ENCODE measurements at regions of chr15 and their contacts with region 1.

Region 1: DNA sequence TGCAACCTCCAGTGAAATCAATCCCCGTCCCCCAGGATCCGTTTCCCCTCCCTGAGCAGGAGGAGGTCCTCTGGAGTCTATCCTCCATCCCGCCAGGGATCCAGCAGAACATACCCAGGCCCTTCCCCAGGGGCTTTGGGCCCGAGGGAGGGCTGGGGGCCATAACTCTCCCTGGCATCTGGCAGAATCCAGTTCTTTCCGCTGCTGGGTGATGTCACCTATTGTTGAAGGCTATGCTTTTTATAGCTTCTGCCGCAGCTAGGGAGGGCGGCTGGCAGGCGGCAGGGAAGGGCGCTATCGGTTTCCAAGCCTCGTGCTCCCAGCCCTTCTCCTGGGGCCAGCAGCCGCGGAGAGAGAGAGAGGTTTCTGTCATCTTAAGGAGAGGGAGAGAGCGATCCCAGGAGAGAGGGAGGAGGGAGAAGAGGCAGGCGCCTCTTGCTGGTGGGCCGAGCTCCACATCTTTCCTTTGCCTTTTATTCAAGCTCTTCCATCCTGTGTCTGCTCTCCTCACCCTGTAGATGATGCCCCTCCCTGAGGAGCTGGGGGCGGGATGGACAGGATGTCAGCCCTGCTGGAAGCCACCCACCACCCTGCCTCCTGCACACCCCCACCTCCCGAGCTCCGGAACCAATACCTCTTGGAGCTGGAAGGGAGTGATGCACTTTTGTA is 120.1 kb downstream of the ANP32A start:
- DNase-seq: peak; percentile 77 to 86 (median 83)
- ATAC-seq: peak; percentile 81 to 92 (median 84)
- H3K4me3 ChIP-seq: peak overlapping the region in 7 of 12 donors; percentile 2 to 33 (median 16)
- H3K27ac ChIP-seq: peak overlapping the region; percentile 41 to 95 (median 88)
- H3K4me1 ChIP-seq: peaks cover 5 to 67% (median 53%) of the 10 kb centered on the region in 12 donors
- H3K27me3 ChIP-seq: no peaks in the 10 kb centered on the region
- CTCF ChIP-seq: no peak
- POLR2A ChIP-seq: no peak

Region 2: DNA sequence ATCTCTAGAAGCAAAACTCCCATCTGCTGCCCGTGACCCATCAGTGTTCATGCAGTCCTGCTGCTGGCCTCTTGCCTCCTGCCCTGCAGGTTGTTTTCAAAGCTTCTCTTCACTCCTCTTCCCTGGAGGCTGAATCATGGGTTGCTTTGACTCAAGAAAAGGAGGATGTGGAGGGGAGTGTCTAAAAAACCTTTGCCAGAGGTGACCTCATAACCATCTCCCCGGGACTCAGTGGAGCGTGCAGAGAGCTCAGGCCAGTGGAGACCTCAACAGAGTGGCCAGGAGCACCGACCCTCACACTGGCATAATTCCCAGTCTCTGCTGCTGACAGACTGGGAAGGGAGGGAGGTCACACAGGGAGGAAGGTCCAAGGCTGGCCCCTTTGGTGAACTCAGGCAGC is 207.7 kb before region 1 on chr15:
- intact Hi-C with region 1: no loop called
- DNase-seq: peak in 3 of 5 donors; percentile 20 to 83 (median 21)
- ATAC-seq: peak; percentile 23 to 86 (median 80)
- H3K4me3 ChIP-seq: no peak overlapping the region
- H3K27ac ChIP-seq: peak overlapping the region in 4 of 12 donors; percentile 8 to 41 (median 20)
- H3K4me1 ChIP-seq: peaks cover 0 to 20% (median 4%) of the 10 kb centered on the region in 12 donors
- H3K27me3 ChIP-seq: peaks cover 0 to 4% (median 0%) of the 10 kb centered on the region in 9 donors
- CTCF ChIP-seq: no peak
- POLR2A ChIP-seq: no peak

Region 3: DNA sequence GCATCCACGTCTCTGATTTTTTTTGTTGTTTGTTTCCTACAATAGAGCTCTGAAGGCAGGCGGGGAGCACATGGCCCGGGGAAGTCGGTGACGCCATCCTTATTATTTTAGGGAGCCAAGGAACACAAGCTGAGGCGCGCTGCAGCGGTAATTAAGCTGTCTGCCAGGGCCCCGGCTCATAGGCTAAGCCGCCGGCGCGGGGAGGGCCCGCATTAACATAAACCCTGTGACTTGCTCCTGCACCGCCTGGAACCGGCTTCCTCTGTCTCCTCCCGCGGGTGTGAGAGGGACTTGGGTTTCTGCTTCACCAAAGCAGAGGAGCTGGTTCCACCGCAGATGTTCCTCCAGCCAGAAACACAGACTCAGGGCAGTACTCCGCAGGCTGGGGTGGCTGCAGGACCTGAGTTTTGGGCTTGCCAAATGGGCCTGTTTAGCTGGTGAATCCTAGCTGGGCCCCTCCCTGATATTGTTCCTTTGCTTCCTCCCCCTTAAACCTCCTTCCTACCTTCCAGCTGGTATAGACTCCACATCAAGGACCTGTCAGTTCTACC is 94.8 kb after region 1 on chr15:
- intact Hi-C with region 1: loop called in 1 of 10 experiments (anchors 10 kb)
- DNase-seq: peak; percentile 92 to 95 (median 93)
- ATAC-seq: peak; percentile 92 to 97 (median 94)
- H3K4me3 ChIP-seq: peak overlapping the region in 8 of 12 donors; percentile 11 to 35 (median 20)
- H3K27ac ChIP-seq: peak overlapping the region; percentile 42 to 92 (median 77)
- H3K4me1 ChIP-seq: peaks cover 31 to 99% (median 93%) of the 10 kb centered on the region in 12 donors
- H3K27me3 ChIP-seq: no peaks in the 10 kb centered on the region
- CTCF ChIP-seq: no peak
- POLR2A ChIP-seq: peak in 1 of 2 donors; percentile 53